HepG2 (cell line): ENCODE measurements at regions of chr17 and their contacts with region 1.

Region 1: DNA sequence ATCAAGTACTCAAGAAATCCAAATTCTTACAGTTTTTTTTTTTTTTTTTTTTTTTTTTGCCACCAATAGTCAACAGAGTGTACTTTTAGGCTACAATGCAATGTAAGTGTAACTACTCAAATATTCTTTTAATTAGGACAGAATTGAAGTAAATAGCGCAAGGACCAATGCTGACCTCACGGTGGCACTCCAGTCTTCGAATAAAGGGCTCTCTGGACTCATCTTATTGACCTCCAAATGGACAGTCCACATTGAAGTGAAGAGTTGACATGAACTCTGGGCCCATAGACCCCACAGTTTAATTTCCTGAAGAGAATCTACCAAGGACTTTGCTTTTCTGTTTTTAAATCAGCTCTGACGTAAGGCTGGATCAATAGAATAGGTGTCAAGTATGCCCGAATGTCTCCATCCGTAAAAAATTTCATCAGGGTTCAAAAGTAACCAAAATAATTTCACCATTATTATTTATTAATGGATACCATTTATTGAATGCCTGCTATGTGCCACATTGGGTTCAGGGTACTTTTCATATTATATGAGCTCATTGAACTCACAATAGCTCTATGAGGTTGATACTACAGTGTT is 7.3 kb upstream of the DDX52 start:
- DNase-seq: peak; percentile 77
- ATAC-seq: peak; percentile 74
- H3K4me3 ChIP-seq: no peak overlapping the region
- H3K27ac ChIP-seq: no peak overlapping the region
- H3K4me1 ChIP-seq: peaks cover 36% of the 10 kb centered on the region
- H3K27me3 ChIP-seq: no peaks in the 10 kb centered on the region; a peak in 1 of 5 replicates
- CTCF ChIP-seq: peak; percentile 81
- EP300 ChIP-seq: no peak
- POLR2A ChIP-seq: no peak
- RAD21 ChIP-seq: peak; percentile 86

Region 2: DNA sequence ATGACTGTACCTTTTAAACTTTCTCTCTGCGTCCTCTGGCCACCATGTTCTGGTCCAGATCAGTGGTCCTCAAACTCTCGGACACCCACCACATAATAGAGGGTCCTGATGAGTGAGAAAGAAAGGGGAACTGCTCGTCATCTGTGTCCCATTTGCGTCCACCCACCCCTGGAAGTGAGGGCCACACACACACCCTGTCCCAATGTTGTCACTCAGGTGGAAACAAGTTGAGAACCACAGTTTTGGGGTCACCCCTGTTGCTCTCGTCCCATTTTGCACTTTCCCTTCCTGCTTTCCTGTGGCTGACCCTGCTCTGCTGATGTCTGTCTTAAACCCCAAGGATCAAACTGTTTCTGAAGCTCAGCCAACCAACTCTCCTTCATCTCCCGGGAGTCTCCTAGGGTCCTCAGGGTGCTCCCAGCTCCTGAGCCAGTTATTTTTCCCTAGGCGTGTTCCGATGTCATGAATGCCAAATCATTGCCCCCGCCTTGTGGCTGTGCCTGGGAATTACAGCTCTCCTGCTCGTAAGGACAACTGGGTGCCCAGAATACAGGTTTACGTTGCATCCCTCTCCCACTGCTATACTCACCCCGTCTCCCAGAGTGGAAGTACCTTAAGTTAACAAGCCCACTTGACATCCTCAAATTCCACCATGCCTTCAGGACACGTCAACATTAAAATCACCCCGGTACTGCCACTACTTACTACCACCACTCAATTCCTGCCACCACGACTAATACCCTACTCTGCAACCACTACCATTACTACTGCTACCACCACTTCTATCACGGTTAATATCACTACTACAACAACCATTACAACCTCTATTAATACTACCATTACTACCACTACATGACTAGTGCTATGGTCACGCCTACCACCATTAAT is 120.4 kb after region 1 on chr17:
- CTCF ChIA-PET with region 1: interaction called, 16 read pairs
- POLR2A ChIA-PET with region 1: interaction called, 11 read pairs
- in situ Hi-C with region 1: no loop called
- intact Hi-C with region 1: loop called (anchors 1 kb)
- DNase-seq: peak; percentile 61
- ATAC-seq: peak; percentile 81
- H3K4me3 ChIP-seq: no peak overlapping the region
- H3K27ac ChIP-seq: no peak overlapping the region
- H3K4me1 ChIP-seq: peaks cover 54% of the 10 kb centered on the region
- H3K27me3 ChIP-seq: peaks cover 0 to 4% of the 10 kb centered on the region in 2 experiments; a peak in 3 of 5 replicates
- CTCF ChIP-seq: peak; percentile 95
- EP300 ChIP-seq: no peak
- POLR2A ChIP-seq: no peak
- RAD21 ChIP-seq: peak; percentile 86

Region 3: DNA sequence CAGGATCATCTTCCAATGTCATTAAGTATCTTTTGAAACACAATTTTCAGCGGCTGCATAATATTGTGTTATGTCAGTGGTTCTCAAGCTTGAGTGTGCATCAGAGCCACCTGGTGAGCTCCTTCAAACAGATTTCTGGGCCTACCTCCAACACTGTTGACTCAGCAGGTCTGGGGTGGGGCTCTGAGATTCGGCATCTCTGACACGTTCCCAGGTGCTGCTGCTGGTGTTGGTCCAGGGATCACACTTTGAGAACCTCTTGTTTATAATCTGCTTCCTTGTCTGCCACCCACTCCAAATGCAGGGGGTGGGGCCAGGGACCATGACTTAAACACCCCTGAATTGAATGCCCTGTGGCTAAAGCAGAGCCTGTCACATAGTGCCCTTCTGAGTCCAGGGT is 168.2 kb after region 1 on chr17:
- CTCF ChIA-PET with region 1: interaction called, 9 read pairs
- POLR2A ChIA-PET with region 1: interaction called, 6 read pairs
- in situ Hi-C with region 1: no loop called
- intact Hi-C with region 1: loop called (anchors 1 kb)
- DNase-seq: no peak
- ATAC-seq: no peak
- H3K4me3 ChIP-seq: no peak overlapping the region
- H3K27ac ChIP-seq: no peak overlapping the region
- H3K4me1 ChIP-seq: peaks cover 29% of the 10 kb centered on the region
- H3K27me3 ChIP-seq: peaks cover 0 to 5% of the 10 kb centered on the region in 2 experiments; a peak in 3 of 5 replicates
- CTCF ChIP-seq: no peak
- EP300 ChIP-seq: no peak
- POLR2A ChIP-seq: no peak
- RAD21 ChIP-seq: no peak